Endothelial cell of umbilical vein (primary cell): ENCODE measurements at regions of chr2 and their contacts with region 1.

Region 1: GRCh38 chr2:41160439-41160838 is 708.5 kb upstream of the SLC8A1 start:
- DNase-seq: peak; percentile 75
- H3K4me3 ChIP-seq: no peak overlapping the region
- H3K27ac ChIP-seq: no peak overlapping the region
- H3K4me1 ChIP-seq: peaks cover 29% of the 10 kb centered on the region
- H3K27me3 ChIP-seq: no peaks in the 10 kb centered on the region
- CTCF ChIP-seq: no peak
- POLR2A ChIP-seq: no peak

Region 2: GRCh38 chr2:41079011-41079410 is 81.4 kb before region 1 on chr2:
- CTCF ChIA-PET with region 1: no interaction called
- POLR2A ChIA-PET with region 1: no interaction called
- dilution Hi-C with region 1: no loop called
- intact Hi-C with region 1: no loop called
- DNase-seq: no peak
- H3K4me3 ChIP-seq: no peak overlapping the region
- H3K27ac ChIP-seq: no peak overlapping the region
- H3K4me1 ChIP-seq: no peaks in the 10 kb centered on the region
- H3K27me3 ChIP-seq: no peaks in the 10 kb centered on the region
- CTCF ChIP-seq: no peak
- POLR2A ChIP-seq: no peak

Region 3: GRCh38 chr2:41170589-41170988 is 10.2 kb after region 1 on chr2:
- CTCF ChIA-PET with region 1: no interaction called
- POLR2A ChIA-PET with region 1: no interaction called
- dilution Hi-C with region 1: no loop called
- intact Hi-C with region 1: no loop called
- DNase-seq: no peak
- H3K4me3 ChIP-seq: no peak overlapping the region
- H3K27ac ChIP-seq: no peak overlapping the region
- H3K4me1 ChIP-seq: peaks cover under 1% of the 10 kb centered on the region
- H3K27me3 ChIP-seq: no peaks in the 10 kb centered on the region
- CTCF ChIP-seq: no peak
- POLR2A ChIP-seq: no peak

Region 4: GRCh38 chr2:41194230-41194629 is 33.8 kb after region 1 on chr2:
- CTCF ChIA-PET with region 1: no interaction called
- POLR2A ChIA-PET with region 1: no interaction called
- dilution Hi-C with region 1: no loop called
- intact Hi-C with region 1: loop called (anchors 1 kb)
- DNase-seq: peak; percentile 94
- H3K4me3 ChIP-seq: no peak overlapping the region
- H3K27ac ChIP-seq: no peak overlapping the region
- H3K4me1 ChIP-seq: peaks cover 12% of the 10 kb centered on the region
- H3K27me3 ChIP-seq: no peaks in the 10 kb centered on the region
- CTCF ChIP-seq: no peak
- POLR2A ChIP-seq: no peak